ENCODE measurements at regions of chr17 and their contacts with region 1.

Region 1: GRCh38 chr17:73371285-73371684 is 59.5 kb upstream of the CDC42EP4 start:
- DNase-seq: no peak
- H3K4me3 ChIP-seq: no peak overlapping the region
- H3K4me3 Mint-ChIP-seq: no peak overlapping the region
- H3K27ac ChIP-seq: no peak overlapping the region
- H3K27ac Mint-ChIP-seq: no peak overlapping the region
- H3K4me1 ChIP-seq: peaks cover 0 to 3% of the 10 kb centered on the region in 2 donors
- H3K4me1 Mint-ChIP-seq: peaks cover 17% of the 10 kb centered on the region
- H3K27me3 ChIP-seq: no peaks in the 10 kb centered on the region
- H3K27me3 Mint-ChIP-seq: peaks cover 1 to 9% (median 4%) of the 10 kb centered on the region in 3 donors
- CTCF ChIP-seq: no peak

Region 2: GRCh38 chr17:72556944-72557826 is 814.1 kb before region 1 on chr17:
- intact Hi-C with region 1: loop called in 1 of 2 experiments (anchors 5 kb)
- DNase-seq: peak; percentile 6 to 37 (median 23)
- H3K4me3 ChIP-seq: no peak overlapping the region
- H3K4me3 Mint-ChIP-seq: no peak overlapping the region
- H3K27ac ChIP-seq: no peak overlapping the region
- H3K27ac Mint-ChIP-seq: no peak overlapping the region
- H3K4me1 ChIP-seq: no peaks in the 10 kb centered on the region
- H3K4me1 Mint-ChIP-seq: no peaks in the 10 kb centered on the region
- H3K27me3 ChIP-seq: no peaks in the 10 kb centered on the region
- H3K27me3 Mint-ChIP-seq: peaks cover 1 to 3% (median 3%) of the 10 kb centered on the region in 3 donors
- CTCF ChIP-seq: peak; percentile 85

Region 3: DNA sequence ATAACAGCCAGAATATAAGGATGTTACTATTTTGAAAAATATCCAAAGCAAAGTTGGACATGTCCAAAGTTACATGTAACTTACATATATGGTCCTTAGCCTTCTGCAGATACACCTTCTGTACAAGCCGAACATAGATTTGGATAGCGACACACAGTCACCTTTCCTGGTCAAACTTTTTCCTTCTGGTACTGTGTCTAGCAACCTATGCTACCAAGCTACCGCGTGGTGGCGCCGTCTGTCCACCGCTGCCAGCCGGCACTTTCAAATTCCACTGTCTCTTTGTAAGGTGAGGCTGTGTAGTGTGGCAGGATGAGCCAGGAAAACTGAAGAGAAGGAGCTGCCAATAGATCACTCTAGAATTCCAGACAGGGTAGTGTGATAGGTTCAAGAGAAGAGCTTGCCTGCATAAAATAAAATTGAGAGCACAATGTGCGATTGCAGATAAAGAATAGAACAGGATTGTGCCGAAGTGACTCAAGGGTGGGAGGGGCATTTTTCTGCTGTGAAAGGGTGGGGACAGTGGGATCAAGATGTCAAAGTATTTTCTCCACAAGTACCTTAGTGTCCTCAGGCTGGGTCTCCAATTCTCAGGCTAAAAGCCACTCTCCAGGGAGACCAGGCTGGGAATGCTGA is 645.7 kb before region 1 on chr17:
- intact Hi-C with region 1: loop called in 1 of 2 experiments (anchors 5 kb)
- DNase-seq: peak in 2 of 3 donors; percentile 15 to 16
- H3K4me3 ChIP-seq: no peak overlapping the region
- H3K4me3 Mint-ChIP-seq: no peak overlapping the region
- H3K27ac ChIP-seq: no peak overlapping the region
- H3K27ac Mint-ChIP-seq: peak overlapping the region in 2 of 7 donors; percentile 9 to 18
- H3K4me1 ChIP-seq: peaks cover 5 to 10% of the 10 kb centered on the region in 2 donors
- H3K4me1 Mint-ChIP-seq: peaks cover 21% of the 10 kb centered on the region
- H3K27me3 ChIP-seq: no peaks in the 10 kb centered on the region
- H3K27me3 Mint-ChIP-seq: no peaks in the 10 kb centered on the region
- CTCF ChIP-seq: peak; percentile 80

Region 4: DNA sequence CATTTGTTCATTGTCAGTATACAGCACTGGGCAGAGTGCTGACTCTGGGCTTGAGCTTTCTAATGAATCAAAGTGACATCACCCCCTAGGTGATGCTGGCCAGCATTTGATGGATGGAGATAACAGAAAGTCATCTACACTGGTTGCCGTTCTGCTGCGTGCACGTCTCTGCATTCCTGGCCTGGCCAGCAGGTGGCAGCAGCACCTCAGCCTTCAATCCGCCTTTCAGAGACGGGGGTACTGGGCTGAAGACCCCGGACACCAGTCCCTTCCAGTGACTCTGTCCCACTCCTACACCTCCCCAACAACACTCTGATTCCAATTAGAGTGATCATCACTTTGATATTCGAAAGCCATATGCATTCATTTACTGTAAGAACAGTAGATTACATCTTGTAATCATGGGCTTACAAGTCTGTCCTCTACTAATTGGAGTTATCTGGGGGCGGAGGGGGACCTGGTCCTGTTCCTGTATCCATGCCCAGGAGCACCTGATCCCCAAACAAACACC is 115.6 kb before region 1 on chr17:
- intact Hi-C with region 1: loop called (anchors 1 kb)
- DNase-seq: peak; percentile 34 to 51 (median 51)
- H3K4me3 ChIP-seq: no peak overlapping the region
- H3K4me3 Mint-ChIP-seq: no peak overlapping the region
- H3K27ac ChIP-seq: no peak overlapping the region
- H3K27ac Mint-ChIP-seq: peak overlapping the region in 1 of 7 donors; percentile 63
- H3K4me1 ChIP-seq: no peaks in the 10 kb centered on the region
- H3K4me1 Mint-ChIP-seq: peaks cover 3% of the 10 kb centered on the region
- H3K27me3 ChIP-seq: no peaks in the 10 kb centered on the region
- H3K27me3 Mint-ChIP-seq: peaks cover 1 to 7% (median 2%) of the 10 kb centered on the region in 3 donors
- CTCF ChIP-seq: peak; percentile 99

Region 5: DNA sequence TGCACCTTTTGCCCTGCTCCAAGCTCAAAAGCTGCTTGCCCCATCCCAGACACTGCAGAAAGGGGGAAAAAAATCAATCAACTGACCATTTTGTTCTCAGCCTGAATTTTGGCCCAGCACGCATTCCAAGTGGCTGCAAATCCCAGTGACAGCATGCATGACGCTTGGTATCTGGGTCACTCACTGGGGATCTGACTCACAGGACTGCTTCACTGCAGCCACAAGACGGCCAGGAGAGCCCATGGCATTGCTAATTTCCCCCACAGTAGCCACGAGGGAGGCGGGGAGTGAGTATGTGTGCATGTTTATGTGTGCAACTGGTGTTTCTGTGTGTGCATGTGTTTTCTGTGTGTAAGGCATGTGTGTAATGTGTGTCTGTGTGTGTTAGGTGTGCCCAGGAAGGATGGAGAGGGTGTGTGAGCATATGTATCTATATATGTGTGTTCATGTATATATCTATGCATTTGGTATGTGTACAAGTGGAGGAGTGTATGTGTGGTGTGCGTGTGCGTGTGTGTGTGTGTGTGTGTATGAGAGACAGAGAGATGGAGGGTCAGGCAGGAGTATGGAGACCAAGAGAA is 239.1 kb after region 1 on chr17:
- intact Hi-C with region 1: no loop called
- DNase-seq: no peak
- H3K4me3 ChIP-seq: no peak overlapping the region
- H3K4me3 Mint-ChIP-seq: no peak overlapping the region
- H3K27ac ChIP-seq: no peak overlapping the region
- H3K27ac Mint-ChIP-seq: no peak overlapping the region
- H3K4me1 ChIP-seq: no peaks in the 10 kb centered on the region
- H3K4me1 Mint-ChIP-seq: no peaks in the 10 kb centered on the region
- H3K27me3 ChIP-seq: no peaks in the 10 kb centered on the region
- H3K27me3 Mint-ChIP-seq: peaks cover 0 to 7% (median 0%) of the 10 kb centered on the region in 3 donors
- CTCF ChIP-seq: no peak

Measured in CD14-positive monocyte (primary cell).